Right ventricle myocardium superior (tissue), 1 donor: ENCODE measurements at regions of chr11 and their contacts with region 1.

Region 1: DNA sequence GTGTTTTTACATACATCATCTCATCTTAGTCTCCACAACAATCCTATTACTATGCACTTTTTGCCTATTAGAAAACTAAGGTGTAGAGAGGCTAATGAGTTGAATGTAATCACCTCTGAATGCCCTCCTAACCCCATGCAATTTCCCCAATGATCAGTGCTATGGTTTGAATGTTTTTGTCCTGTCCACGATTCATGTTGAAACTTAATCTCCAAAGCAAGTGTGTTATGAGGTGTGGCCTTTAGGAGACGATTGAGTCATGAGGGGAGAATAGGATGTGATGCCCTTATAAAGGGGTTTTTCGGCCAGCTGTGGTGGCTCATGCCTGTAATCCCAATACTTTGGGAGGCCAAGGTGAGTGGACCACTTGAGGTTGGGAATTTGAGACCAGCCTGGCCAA is 2.0 kb upstream of the CCDC73 start:
- DNase-seq: no peak
- ATAC-seq: no peak

Region 2: DNA sequence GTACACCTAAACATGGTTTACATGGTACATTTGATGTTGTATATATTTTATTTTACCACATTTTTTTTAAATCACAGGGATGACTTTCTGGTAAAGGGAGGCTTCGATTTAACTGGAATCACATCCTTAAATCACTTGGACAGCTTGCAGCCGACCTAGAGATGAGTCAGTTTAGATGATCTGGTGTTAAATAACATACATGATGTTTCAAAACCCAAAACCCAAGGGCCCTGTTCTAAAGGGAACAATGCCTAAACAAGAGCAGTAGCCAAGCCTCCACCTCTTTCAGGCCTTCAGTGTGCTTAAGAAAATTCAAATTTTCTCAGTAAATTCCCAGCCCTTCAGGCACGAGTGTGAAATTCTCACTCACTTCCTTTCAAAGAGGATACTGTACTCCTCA is 469.9 kb before region 1 on chr11:
- intact Hi-C with region 1: loop called (anchors 5 kb)
- DNase-seq: no peak
- ATAC-seq: no peak

Region 3: DNA sequence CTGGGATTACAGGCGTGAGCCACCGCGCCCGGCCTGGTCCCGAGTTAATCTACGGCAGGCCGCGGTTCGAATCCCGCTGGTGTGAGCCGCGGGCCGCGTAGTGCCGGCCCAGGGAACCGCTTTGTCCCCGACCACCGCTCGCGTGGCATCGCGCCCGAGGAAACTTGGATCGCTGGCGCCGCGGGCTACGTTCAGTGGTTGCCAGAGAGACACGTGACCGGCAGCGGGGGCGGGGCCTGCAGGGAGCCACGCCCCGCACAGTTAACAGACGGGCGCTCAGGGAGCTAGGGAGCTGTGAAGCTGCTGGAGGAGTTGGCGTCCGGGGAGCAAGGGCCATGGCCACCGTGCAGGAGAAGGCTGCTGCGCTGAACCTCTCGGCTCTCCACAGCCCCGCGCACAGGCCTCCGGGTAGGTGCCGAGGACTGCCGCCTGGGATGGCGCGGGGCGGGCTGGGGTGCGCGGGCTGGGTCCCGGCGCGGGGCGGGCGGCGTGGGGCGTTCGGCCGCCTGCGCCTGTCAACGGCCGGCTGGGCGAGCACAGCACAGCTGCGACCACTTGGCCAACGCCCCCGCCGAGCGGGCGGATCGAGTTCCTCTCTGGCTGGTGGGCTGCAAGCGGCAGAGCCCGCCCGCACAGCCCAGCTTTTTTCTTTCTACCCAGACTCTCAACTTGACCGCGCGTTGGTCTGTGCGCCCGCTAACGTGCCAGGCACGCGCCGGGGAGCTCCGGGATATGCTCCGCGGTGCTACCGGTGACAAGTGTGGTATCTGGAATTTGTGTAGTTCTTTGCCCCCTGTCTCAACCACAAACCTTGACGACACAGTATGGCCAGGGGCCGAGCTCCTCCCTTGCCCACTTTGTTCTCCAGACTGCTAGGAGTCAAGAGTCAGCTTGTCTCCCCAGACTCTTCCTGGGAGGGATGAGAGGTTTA is 219.5 kb after region 1 on chr11 and contains the start of gene DEPDC7:
- intact Hi-C with region 1: no loop called
- DNase-seq: peak; percentile 92
- ATAC-seq: peak; percentile 97
- total RNA-seq, gene DEPDC7: 0.32 TPM